Upper lobe of right lung (tissue), 1 donor: ENCODE measurements at regions of chr16 and their contacts with region 1.

Region 1: GRCh38 chr16:352547-353403 is at the start of gene AXIN1:
- DNase-seq: peak; percentile 100
- ATAC-seq: peak; percentile 94
- H3K4me3 ChIP-seq: peak within 1 kb of the TSS; percentile 69
- H3K27ac ChIP-seq: peak within 1 kb of the TSS; percentile 68
- H3K4me1 ChIP-seq: peaks cover 10% of the 10 kb centered on the region
- H3K27me3 ChIP-seq: no peaks in the 10 kb centered on the region
- CTCF ChIP-seq: peak; percentile 27
- total RNA-seq, gene AXIN1: 28.9 TPM

Region 2: GRCh38 chr16:234468-235305 is 118.1 kb before region 1 on chr16 and contains the start of gene FAM234A:
- intact Hi-C with region 1: loop called (anchors 10 kb)
- DNase-seq: peak; percentile 97
- ATAC-seq: peak; percentile 98
- H3K4me3 ChIP-seq: peak within 1 kb of the TSS; percentile 85
- H3K27ac ChIP-seq: peak within 1 kb of the TSS; percentile 97
- H3K4me1 ChIP-seq: peaks cover under 1% of the 10 kb centered on the region
- H3K27me3 ChIP-seq: no peaks in the 10 kb centered on the region
- CTCF ChIP-seq: peak; percentile 44
- total RNA-seq, gene FAM234A: 56.0 TPM

Region 3: DNA sequence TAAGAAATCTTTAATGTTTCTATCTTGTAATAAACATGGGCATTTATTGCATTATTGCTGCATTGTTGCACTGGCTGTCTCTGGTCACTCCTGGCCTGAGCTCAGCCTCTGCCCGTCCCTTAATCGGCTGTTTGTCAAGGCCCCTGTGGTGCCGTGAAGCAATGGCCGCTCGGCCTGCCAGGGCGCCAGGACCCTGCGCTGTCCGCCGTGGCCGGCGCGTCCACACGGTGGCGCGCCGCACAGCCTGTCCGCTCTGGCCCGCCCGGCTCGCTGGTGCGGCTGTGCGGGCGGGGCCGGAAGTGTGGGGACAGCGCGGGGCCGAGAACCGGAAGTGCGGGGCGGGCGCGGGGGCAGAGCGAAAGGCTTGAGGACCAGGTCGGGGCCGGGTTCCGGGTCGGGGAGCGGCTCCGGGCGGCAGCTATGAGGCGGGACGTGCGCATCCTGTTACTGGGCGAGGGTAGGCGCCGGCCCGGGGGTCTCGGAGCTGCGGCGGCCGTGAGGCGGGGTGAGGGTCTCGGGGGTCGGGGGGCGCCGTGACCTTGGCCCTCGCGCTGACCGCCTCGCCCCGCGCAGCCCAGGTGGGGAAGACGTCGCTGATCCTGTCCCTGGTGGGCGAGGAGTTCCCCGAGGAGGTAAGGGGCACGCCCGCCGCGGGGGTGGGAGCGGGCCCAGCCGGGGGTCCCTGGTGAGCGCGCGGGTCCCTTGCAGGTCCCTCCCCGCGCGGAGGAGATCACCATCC is 315.2 kb after region 1 on chr16 and contains the start of gene RHOT2:
- intact Hi-C with region 1: no loop called
- DNase-seq: peak; percentile 97
- ATAC-seq: peak; percentile 96
- H3K4me3 ChIP-seq: peak within 1 kb of the TSS; percentile 97
- H3K27ac ChIP-seq: peak within 1 kb of the TSS; percentile 87
- H3K4me1 ChIP-seq: peaks cover 12% of the 10 kb centered on the region
- H3K27me3 ChIP-seq: no peaks in the 10 kb centered on the region
- CTCF ChIP-seq: peak; percentile 84
- total RNA-seq, gene RHOT2: 92.5 TPM